Dendritic cell treated with granulocyte-macrophage colony-stimulating factor and Interleukin-4, amounts not matched to agents 40 ng/mL and 50 ng/mL, for 4 days (primary cell): ENCODE measurements at regions of chr2 and their contacts with region 1.

Region 1: GRCh38 chr2:218395797-218396687 is 3.6 kb upstream of the CTDSP1 start:
- H3K4me3 Mint-ChIP-seq: peak overlapping the region; percentile 86
- H3K27ac Mint-ChIP-seq: peak overlapping the region; percentile 96
- H3K4me1 Mint-ChIP-seq: peaks cover 66% of the 10 kb centered on the region
- H3K27me3 Mint-ChIP-seq: no peaks in the 10 kb centered on the region

Region 2: DNA sequence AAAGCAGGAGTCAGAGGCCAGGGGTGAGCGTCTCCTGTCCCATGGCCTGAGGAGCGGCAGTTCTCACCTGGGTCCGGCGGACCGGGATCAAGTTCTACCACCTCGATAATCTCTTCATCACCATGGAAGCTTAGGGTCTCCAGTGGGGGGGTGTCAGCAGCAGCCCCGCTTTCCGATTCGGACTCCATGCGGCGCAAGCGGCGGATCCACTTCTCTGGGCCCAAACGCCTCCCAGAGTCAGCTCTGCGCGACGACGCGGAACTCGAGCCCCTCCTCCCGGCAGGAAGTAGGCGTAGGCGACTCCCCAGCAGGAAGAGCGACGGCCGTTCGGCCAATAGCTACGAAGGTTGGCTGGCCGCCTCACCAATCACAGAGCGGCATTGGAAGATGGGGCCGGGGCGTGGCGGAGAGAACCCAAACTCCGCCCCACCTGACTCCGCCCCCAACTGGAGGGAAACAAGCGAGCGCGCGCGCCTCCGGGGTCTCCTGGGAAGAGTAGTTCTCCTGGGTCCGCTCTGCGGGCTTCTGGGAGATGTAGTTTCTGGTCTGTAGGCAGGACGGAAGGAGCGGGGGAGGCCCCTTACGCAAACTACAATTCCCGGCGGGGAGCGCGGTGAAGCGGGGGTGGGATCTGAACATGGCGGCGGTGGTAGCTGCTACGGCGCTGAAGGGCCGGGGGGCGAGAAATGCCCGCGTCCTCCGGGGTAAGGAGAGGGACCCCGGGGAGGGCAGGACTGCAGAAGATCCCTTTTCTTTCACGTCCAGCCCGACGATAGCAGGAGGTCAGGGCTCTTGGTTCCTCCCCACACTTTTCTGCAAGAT is 125.9 kb before region 1 on chr2 and contains the starts of genes AAMP and PNKD:
- intact Hi-C with region 1: loop called (anchors 1 kb)
- H3K4me3 Mint-ChIP-seq: peak within 1 kb of the TSS; percentile 85
- H3K27ac Mint-ChIP-seq: peak within 1 kb of the TSS; percentile 89
- H3K4me1 Mint-ChIP-seq: peaks cover 69% of the 10 kb centered on the region
- H3K27me3 Mint-ChIP-seq: no peaks in the 10 kb centered on the region

Region 3: GRCh38 chr2:218292048-218293014 is 103.7 kb before region 1 on chr2 and contains the start of gene TMBIM1:
- intact Hi-C with region 1: loop called (anchors 2 kb)
- H3K4me3 Mint-ChIP-seq: peak within 1 kb of the TSS; percentile 77
- H3K27ac Mint-ChIP-seq: peak within 1 kb of the TSS; percentile 99
- H3K4me1 Mint-ChIP-seq: peaks cover 52% of the 10 kb centered on the region
- H3K27me3 Mint-ChIP-seq: peaks cover 1% of the 10 kb centered on the region

Region 4: GRCh38 chr2:218360447-218360846 is 35.6 kb before region 1 on chr2:
- intact Hi-C with region 1: loop called (anchors 2 kb)
- H3K4me3 Mint-ChIP-seq: peak overlapping the region; percentile 49
- H3K27ac Mint-ChIP-seq: peak overlapping the region; percentile 78
- H3K4me1 Mint-ChIP-seq: peaks cover 74% of the 10 kb centered on the region
- H3K27me3 Mint-ChIP-seq: no peaks in the 10 kb centered on the region

Region 5: GRCh38 chr2:218406209-218406948 is 10.3 kb after region 1 on chr2:
- intact Hi-C with region 1: loop called (anchors 1 kb)
- H3K4me3 Mint-ChIP-seq: peak overlapping the region; percentile 60
- H3K27ac Mint-ChIP-seq: peak overlapping the region; percentile 89
- H3K4me1 Mint-ChIP-seq: peaks cover 69% of the 10 kb centered on the region
- H3K27me3 Mint-ChIP-seq: no peaks in the 10 kb centered on the region

Region 6: GRCh38 chr2:218482651-218483050 is 86.6 kb after region 1 on chr2:
- intact Hi-C with region 1: no loop called
- H3K4me3 Mint-ChIP-seq: no peak overlapping the region
- H3K27ac Mint-ChIP-seq: no peak overlapping the region
- H3K4me1 Mint-ChIP-seq: no peaks in the 10 kb centered on the region
- H3K27me3 Mint-ChIP-seq: no peaks in the 10 kb centered on the region

Region 7: GRCh38 chr2:218876562-218877219 is 480.6 kb after region 1 on chr2:
- intact Hi-C with region 1: no loop called
- H3K4me3 Mint-ChIP-seq: no peak overlapping the region
- H3K27ac Mint-ChIP-seq: no peak overlapping the region
- H3K4me1 Mint-ChIP-seq: peaks cover 36% of the 10 kb centered on the region
- H3K27me3 Mint-ChIP-seq: peaks cover 95% of the 10 kb centered on the region